ENCODE measurements at regions of chr1 and their contacts with region 1.

Region 1: GRCh38 chr1:116826818-116827606 is 72.8 kb downstream of the CD2 start:
- DNase-seq: peak; percentile 79 to 97 (median 86)
- ATAC-seq: peak; percentile 81
- H3K4me3 ChIP-seq: peak overlapping the region; percentile 26
- H3K27ac ChIP-seq: peak overlapping the region; percentile 94
- H3K4me1 ChIP-seq: peaks cover 24 to 54% of the 10 kb centered on the region in 2 experiments
- H3K27me3 ChIP-seq: no peaks in the 10 kb centered on the region
- CTCF ChIP-seq: no peak
- EP300 ChIP-seq: peak; percentile 94
- POLR2A ChIP-seq: peak; percentile 85
- RAD21 ChIP-seq: no peak; a peak in 1 of 4 replicates

Region 2: GRCh38 chr1:116881879-116882520 is 55.0 kb after region 1 on chr1:
- CTCF ChIA-PET with region 1: no interaction called
- POLR2A ChIA-PET with region 1: interaction called, 3 read pairs
- in situ Hi-C with region 1: no loop called
- intact Hi-C with region 1: loop called (anchors 2 kb)
- DNase-seq: peak; percentile 57 to 85 (median 70)
- ATAC-seq: peak; percentile 92
- H3K4me3 ChIP-seq: no peak overlapping the region
- H3K27ac ChIP-seq: peak overlapping the region; percentile 58
- H3K4me1 ChIP-seq: peaks cover 23 to 36% of the 10 kb centered on the region in 2 experiments
- H3K27me3 ChIP-seq: no peaks in the 10 kb centered on the region
- CTCF ChIP-seq: peak; percentile 86 to 88 (median 88)
- EP300 ChIP-seq: peak; percentile 51
- POLR2A ChIP-seq: no peak
- RAD21 ChIP-seq: peak; percentile 88 to 93

Region 3: GRCh38 chr1:116909510-116910378 is 82.7 kb after region 1 on chr1 and contains the start of gene PTGFRN:
- CTCF ChIA-PET with region 1: no interaction called
- POLR2A ChIA-PET with region 1: interaction called, 7 read pairs
- in situ Hi-C with region 1: no loop called
- intact Hi-C with region 1: loop called (anchors 5 kb)
- DNase-seq: peak; percentile 72 to 78 (median 76)
- ATAC-seq: peak; percentile 74
- H3K4me3 ChIP-seq: peak within 1 kb of the TSS; percentile 65
- H3K27ac ChIP-seq: peak within 1 kb of the TSS; percentile 74
- H3K4me1 ChIP-seq: peaks cover 31 to 33% of the 10 kb centered on the region in 2 experiments
- H3K27me3 ChIP-seq: no peaks in the 10 kb centered on the region
- CTCF ChIP-seq: no peak
- EP300 ChIP-seq: no peak
- POLR2A ChIP-seq: peak; percentile 51; the same call in 1 of the 2 replicates
- RAD21 ChIP-seq: 0 out of 4 replicates have a peak, but pooled peaks of 1 of the 2 experiments have one; percentile 6
- polyA plus RNA-seq, gene PTGFRN: 17.3 to 26.5 TPM

Region 4: GRCh38 chr1:117137316-117137855 is 310.4 kb after region 1 on chr1:
- CTCF ChIA-PET with region 1: no interaction called
- POLR2A ChIA-PET with region 1: no interaction called
- in situ Hi-C with region 1: no loop called
- intact Hi-C with region 1: no loop called
- DNase-seq: no peak
- ATAC-seq: no peak
- H3K4me3 ChIP-seq: no peak overlapping the region
- H3K27ac ChIP-seq: no peak overlapping the region
- H3K4me1 ChIP-seq: no peaks in the 10 kb centered on the region
- H3K27me3 ChIP-seq: peaks cover 4 to 7% of the 10 kb centered on the region in 2 experiments; a peak in 4 of 5 replicates
- CTCF ChIP-seq: no peak
- EP300 ChIP-seq: no peak
- POLR2A ChIP-seq: no peak
- RAD21 ChIP-seq: no peak

Region 5: DNA sequence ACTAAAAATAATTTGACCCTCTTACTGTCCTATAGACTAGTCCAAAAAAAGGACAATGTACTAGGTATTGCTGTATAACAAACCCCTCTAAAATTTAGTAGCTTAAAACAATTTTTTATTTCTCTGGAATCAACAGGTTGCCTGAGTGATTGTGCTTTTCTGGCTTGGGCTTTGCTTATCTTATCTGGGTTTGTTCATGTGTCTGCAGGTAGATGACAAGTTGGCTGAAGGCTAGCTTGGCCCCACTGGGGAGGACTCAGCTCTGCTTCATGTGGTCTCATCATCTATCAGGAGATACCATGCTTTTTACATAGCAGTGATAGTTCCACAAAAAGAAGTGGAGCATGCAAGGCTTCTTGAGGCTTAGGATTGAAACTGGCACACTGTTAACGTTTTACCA is 654.4 kb after region 1 on chr1:
- CTCF ChIA-PET with region 1: no interaction called
- POLR2A ChIA-PET with region 1: no interaction called
- in situ Hi-C with region 1: no loop called
- intact Hi-C with region 1: no loop called
- DNase-seq: peak in 2 of 4 experiments; percentile 19 to 45
- ATAC-seq: peak; percentile 68
- H3K4me3 ChIP-seq: no peak overlapping the region
- H3K27ac ChIP-seq: no peak overlapping the region
- H3K4me1 ChIP-seq: peaks cover 0 to 6% of the 10 kb centered on the region in 2 experiments; a peak in 3 of 5 replicates
- H3K27me3 ChIP-seq: no peaks in the 10 kb centered on the region
- CTCF ChIP-seq: no peak
- EP300 ChIP-seq: no peak
- POLR2A ChIP-seq: no peak
- RAD21 ChIP-seq: no peak